Activated B cell treated with CpG ODN at 0.5 μM for 24 hours (primary cell): ENCODE measurements at regions of chr15 and their contacts with region 1.

Region 1: DNA sequence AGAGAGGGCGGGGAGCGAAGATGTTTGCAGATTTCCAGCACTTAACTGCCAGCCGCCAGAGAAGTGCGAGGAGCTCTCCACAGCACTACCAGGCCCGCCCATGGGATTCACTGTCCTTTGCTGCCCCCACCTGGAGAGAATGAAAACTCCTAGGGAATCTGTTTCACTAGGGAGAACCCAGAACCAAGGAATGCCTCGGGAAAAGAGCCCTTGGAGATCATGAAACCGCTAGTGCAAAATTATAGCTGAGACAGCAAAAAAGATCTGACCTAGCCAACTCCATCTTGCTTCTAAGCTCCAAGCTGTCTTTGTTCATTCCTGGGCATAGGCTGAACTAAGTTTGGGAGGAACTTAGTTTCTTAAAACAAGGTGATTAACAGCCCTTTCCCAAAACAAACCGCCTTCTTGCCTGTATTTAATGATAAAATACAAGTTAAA is 82.6 kb upstream of the GCNT3 start:
- DNase-seq: peak; percentile 32
- ATAC-seq: peak; percentile 87
- H3K4me3 Mint-ChIP-seq: no peak overlapping the region
- H3K27ac Mint-ChIP-seq: peak overlapping the region; percentile 72
- H3K4me1 Mint-ChIP-seq: peaks cover 30% of the 10 kb centered on the region
- H3K27me3 Mint-ChIP-seq: no peaks in the 10 kb centered on the region
- CTCF ChIP-seq: peak; percentile 58

Region 2: GRCh38 chr15:59138243-59138642 is 390.7 kb before region 1 on chr15:
- CTCF ChIA-PET with region 1: interaction called, 3 read pairs
- POLR2A ChIA-PET with region 1: no interaction called
- intact Hi-C with region 1: loop called (anchors 1 kb)
- DNase-seq: peak; percentile 51
- ATAC-seq: peak; percentile 96
- H3K4me3 Mint-ChIP-seq: no peak overlapping the region
- H3K27ac Mint-ChIP-seq: peak overlapping the region; percentile 13
- H3K4me1 Mint-ChIP-seq: peaks cover 10% of the 10 kb centered on the region
- H3K27me3 Mint-ChIP-seq: no peaks in the 10 kb centered on the region
- CTCF ChIP-seq: no peak

Region 3: DNA sequence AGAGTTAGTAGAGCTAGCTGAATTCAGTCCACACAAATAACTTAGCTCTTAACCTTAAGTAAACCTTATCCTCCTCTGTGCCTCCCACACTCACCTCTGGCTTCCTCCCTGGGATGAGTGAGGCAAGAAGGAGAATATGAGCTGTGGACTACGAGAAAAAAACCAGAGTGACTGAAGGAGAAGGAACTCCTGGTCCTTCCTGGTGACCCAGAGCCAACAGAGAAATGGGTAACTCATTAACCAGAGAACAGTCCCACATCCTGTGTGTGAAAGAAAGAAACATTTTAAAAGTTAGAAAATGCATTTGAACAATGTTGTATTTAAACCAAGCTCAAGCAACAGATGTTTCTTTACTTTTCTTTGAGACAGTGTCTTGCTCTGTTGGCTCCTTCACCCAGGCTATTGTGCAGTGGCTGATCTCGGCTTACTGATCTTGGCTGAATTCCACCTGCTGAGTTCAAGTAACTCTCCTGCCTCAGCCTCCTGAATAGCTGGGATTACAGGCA is 118.5 kb before region 1 on chr15:
- CTCF ChIA-PET with region 1: interaction called, 12 read pairs
- POLR2A ChIA-PET with region 1: interaction called, 5 read pairs
- intact Hi-C with region 1: no loop called
- DNase-seq: no peak
- ATAC-seq: no peak
- H3K4me3 Mint-ChIP-seq: peak overlapping the region; percentile 73
- H3K27ac Mint-ChIP-seq: peak overlapping the region; percentile 98
- H3K4me1 Mint-ChIP-seq: peaks cover 84% of the 10 kb centered on the region
- H3K27me3 Mint-ChIP-seq: no peaks in the 10 kb centered on the region
- CTCF ChIP-seq: no peak

Region 4: GRCh38 chr15:59543721-59544547 is 14.9 kb after region 1 on chr15:
- CTCF ChIA-PET with region 1: interaction called, 14 read pairs
- POLR2A ChIA-PET with region 1: interaction called, 3 read pairs
- intact Hi-C with region 1: no loop called
- DNase-seq: no peak
- ATAC-seq: peak; percentile 85
- H3K4me3 Mint-ChIP-seq: peak overlapping the region; percentile 48
- H3K27ac Mint-ChIP-seq: peak overlapping the region; percentile 47
- H3K4me1 Mint-ChIP-seq: peaks cover 18% of the 10 kb centered on the region
- H3K27me3 Mint-ChIP-seq: no peaks in the 10 kb centered on the region
- CTCF ChIP-seq: no peak

Region 5: DNA sequence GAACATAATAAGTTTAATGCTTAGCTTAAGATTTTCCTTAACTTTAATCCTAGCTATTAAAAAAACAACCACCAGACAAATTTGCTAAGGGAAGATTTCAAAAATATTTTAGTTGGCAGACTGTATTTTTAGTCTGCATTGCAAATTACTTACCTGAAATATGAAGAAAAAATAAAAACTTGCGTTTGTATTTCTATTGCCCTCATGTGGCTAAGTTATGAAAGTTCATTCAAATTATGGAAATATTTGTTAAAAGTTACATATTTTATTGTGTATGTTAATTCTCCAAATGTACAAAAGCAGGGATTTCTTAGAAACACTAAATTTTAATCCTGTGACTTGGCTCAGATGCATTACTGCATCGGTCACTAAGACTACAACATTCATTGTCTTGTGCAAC is 113.4 kb after region 1 on chr15:
- CTCF ChIA-PET with region 1: interaction called, 11 read pairs
- POLR2A ChIA-PET with region 1: interaction called, 5 read pairs
- intact Hi-C with region 1: loop called (anchors 5 kb)
- DNase-seq: no peak
- ATAC-seq: no peak
- H3K4me3 Mint-ChIP-seq: no peak overlapping the region
- H3K27ac Mint-ChIP-seq: no peak overlapping the region
- H3K4me1 Mint-ChIP-seq: no peaks in the 10 kb centered on the region
- H3K27me3 Mint-ChIP-seq: no peaks in the 10 kb centered on the region
- CTCF ChIP-seq: no peak

Region 6: GRCh38 chr15:59825913-59826312 is 296.9 kb after region 1 on chr15:
- CTCF ChIA-PET with region 1: no interaction called
- POLR2A ChIA-PET with region 1: no interaction called
- intact Hi-C with region 1: no loop called
- DNase-seq: no peak
- ATAC-seq: no peak
- H3K4me3 Mint-ChIP-seq: no peak overlapping the region
- H3K27ac Mint-ChIP-seq: no peak overlapping the region
- H3K4me1 Mint-ChIP-seq: no peaks in the 10 kb centered on the region
- H3K27me3 Mint-ChIP-seq: peaks cover 5% of the 10 kb centered on the region
- CTCF ChIP-seq: no peak

Region 7: DNA sequence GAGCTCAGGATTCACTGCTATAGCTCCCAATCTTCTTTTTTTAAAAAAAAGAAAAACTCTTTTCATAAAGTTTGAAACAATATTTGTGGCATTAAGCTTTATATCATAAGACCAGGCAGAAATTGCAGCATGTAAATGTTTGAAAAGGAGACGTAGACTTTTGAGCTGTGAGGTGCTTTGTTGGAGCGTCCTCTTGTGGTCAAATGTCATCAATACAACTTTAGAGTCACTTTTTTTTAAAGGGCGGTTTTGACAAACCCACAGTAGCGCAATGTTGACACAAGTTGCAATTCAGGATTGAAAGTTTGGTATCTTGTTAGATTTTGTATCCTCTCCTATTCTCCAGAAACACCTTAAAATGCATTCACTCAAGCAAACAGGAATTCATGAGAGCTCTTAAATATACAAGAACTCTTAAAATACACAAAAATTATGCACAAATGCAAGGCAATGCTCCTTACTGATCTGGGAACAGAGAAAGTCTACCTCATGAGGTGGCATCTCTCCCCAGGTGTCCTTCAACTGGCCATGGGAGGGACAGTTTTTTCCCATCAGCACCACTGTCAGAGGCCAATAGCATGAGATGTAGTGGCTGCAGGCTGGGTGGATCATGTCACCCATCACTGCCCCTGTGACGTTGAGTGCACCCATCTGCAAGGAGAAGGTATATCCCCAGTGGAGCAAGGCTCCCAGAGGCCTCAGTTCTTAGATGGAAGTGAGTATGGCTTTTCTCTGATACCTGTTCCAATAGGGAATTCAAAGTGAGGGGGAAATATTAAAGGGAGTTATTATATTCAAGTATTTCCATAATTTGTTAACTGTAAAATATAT is 798.1 kb after region 1 on chr15:
- CTCF ChIA-PET with region 1: interaction called, 5 read pairs
- POLR2A ChIA-PET with region 1: no interaction called
- intact Hi-C with region 1: loop called (anchors 5 kb)
- DNase-seq: no peak
- ATAC-seq: peak; percentile 37
- H3K4me3 Mint-ChIP-seq: no peak overlapping the region
- H3K27ac Mint-ChIP-seq: no peak overlapping the region
- H3K4me1 Mint-ChIP-seq: peaks cover 4% of the 10 kb centered on the region
- H3K27me3 Mint-ChIP-seq: peaks cover 35% of the 10 kb centered on the region
- CTCF ChIP-seq: no peak